ENCODE measurements at regions of chr10 and their contacts with region 1.

Region 1: DNA sequence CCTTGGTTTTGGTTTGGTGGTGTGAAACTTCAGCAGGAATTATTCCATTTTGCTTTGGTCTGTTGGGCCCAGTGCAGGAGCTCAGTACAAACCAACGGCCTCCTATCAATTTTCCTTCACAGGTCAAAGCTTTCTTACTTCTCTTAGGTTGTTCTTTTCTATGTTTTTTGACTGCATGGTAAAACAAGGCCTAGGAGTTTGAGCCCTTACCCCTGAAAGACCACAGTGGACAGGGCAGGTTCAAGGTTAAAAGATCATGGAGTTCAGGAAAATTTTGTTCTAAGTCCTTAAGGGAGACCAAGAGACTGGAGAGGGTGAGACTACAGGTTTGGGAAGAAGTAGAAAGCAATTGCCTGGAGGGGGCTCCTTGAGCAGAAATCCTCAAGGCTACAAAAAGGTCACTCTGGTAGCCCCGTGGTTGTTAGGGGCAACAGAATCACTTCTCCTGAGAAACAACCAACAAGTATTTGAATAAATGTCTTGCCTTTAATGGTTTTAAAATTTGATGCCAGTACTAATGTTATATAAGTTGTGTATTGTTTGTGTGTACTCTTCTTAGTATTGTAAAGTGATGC is 40.9 kb upstream of the FHIP2A start:
- DNase-seq: no peak
- ATAC-seq: peak; percentile 9 to 38; a peak in 3 of 6 replicates
- H3K4me3 ChIP-seq: no peak overlapping the region
- H3K27ac ChIP-seq: peak overlapping the region; percentile 68 to 79
- H3K4me1 ChIP-seq: peaks cover 37% of the 10 kb centered on the region
- CTCF ChIP-seq: no peak
- EP300 ChIP-seq: no peak
- POLR2A ChIP-seq: no peak
- RAD21 ChIP-seq: no peak

Region 2: DNA sequence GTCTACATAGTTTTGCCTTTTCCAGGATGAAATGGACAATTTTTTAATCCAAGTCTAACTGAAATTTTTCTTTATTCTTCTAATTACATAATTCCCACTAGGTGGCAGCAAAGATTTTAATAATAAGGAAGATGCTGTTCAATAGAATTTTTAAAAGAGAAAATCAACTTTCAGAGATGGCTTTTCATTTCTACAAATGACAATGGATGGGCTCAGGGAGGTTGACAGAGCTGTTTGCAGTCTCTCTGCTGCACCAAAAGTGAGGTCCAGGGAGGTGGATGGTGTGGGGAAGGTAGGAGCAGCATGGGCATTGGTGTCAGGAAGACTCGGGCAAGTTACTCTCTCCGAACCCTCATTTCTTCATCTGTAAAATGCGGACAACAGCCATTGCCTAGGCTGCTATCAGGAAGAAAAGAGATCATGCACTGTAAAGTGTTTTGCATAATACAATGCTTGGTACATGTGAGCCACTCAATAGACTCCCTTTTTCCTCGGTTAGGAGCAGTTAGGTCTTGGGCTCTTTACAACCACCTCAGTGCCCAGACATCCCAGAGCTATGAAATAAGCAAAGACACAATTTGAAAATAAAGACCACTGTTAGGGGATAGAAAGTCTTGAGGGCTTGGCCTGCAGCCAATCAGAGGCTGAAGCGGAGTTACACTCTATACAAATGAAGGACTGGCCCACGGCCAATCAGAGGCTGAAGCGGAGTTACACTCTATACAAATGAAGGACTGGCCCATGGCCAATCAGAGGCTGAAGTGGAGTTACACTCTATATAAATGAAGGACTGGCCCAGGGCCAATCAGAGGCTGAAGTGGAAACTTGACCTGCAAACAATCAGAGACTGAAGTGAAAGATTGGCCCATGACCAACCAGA is 229.7 kb before region 1 on chr10:
- CTCF ChIA-PET with region 1: interaction called, 89 read pairs
- POLR2A ChIA-PET with region 1: no interaction called
- DNase-seq: peak; percentile 9 to 17
- ATAC-seq: peak in 1 of 2 experiments; percentile 30; a peak in 2 of 6 replicates
- H3K4me3 ChIP-seq: no peak overlapping the region
- H3K27ac ChIP-seq: no peak overlapping the region
- H3K4me1 ChIP-seq: no peaks in the 10 kb centered on the region
- CTCF ChIP-seq: peak; percentile 79
- EP300 ChIP-seq: no peak
- POLR2A ChIP-seq: no peak
- RAD21 ChIP-seq: peak; percentile 78 to 93

Region 3: DNA sequence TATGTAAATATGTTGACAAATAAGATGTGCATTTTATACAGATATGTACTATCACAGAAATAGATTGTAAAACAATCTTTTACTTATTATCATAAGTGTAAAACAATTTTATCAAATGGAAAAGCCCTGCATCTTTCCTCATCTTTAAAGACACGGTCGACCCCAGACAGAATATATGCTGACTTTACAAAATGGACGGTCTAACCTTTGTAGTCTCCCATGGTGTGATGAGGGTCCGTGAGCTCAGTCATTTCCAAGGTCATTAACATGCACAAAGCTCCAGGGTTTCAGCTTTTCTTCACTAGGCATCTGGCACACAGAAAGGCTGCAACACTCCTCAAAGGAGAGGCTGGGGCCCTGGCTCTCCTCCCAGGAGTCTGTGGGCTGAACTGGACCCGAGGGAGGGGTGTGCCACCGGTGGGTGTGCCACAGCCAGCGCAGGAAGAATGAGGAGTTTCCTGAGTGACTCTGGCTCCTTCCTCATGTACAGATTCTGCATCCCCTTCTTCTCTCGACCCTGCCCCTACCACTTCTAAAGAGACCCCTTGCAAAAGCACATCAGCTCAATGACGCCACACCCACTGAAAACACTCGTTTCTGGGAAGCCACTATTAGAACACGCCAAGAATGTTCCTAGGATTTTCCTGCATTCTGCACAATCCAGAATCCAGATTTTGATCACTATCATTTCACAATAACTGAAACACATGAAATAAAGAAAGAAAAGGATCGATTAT is 96.4 kb before region 1 on chr10:
- CTCF ChIA-PET with region 1: interaction called, 15 read pairs
- POLR2A ChIA-PET with region 1: no interaction called
- DNase-seq: peak; percentile 47 to 69
- ATAC-seq: peak; percentile 85 to 86
- H3K4me3 ChIP-seq: peak overlapping the region; percentile 36
- H3K27ac ChIP-seq: peak overlapping the region; percentile 83 to 88
- H3K4me1 ChIP-seq: peaks cover 74% of the 10 kb centered on the region
- CTCF ChIP-seq: no peak
- EP300 ChIP-seq: no peak
- POLR2A ChIP-seq: no peak
- RAD21 ChIP-seq: no peak

Region 4: DNA sequence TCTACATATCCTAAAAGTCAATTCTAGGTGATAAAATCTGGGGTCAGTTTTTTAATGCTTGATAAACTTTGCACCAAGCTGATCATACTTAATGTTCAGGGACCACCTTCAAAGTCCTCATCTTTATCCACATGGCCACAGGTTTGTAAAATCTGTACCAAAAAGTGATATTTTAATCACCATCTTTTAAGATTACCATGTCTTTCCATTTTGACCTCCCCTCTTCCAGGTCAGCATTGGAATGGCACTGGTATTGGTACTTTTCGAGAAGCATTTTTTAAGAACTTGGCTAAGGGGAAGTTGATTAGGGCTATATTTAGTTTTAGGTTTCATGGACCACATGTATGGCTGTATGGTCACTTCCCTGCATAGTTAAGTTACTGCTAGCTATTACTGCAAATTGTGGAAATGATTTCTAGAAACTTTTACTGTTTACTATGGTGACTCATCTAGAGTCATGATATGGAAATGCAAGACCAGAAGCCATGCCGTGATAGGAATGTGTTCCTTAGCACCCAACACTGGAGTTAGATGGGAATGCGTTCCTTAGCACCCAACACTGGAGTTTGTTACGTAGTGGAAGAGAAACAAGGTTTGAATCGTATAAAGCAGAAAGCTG is 71.9 kb before region 1 on chr10:
- CTCF ChIA-PET with region 1: interaction called, 33 read pairs
- POLR2A ChIA-PET with region 1: no interaction called
- DNase-seq: peak; percentile 58 to 78
- ATAC-seq: peak; percentile 90 to 93
- H3K4me3 ChIP-seq: no peak overlapping the region
- H3K27ac ChIP-seq: peak overlapping the region; percentile 57 to 73; a peak in 5 of 6 replicates
- H3K4me1 ChIP-seq: peaks cover 34% of the 10 kb centered on the region
- CTCF ChIP-seq: no peak
- EP300 ChIP-seq: no peak
- POLR2A ChIP-seq: no peak
- RAD21 ChIP-seq: 0 out of 5 replicates have a peak, but pooled peaks of 1 of the 2 experiments have one; percentile 14

Region 5: GRCh38 chr10:114735946-114736345 is 44.8 kb before region 1 on chr10:
- CTCF ChIA-PET with region 1: no interaction called
- POLR2A ChIA-PET with region 1: no interaction called
- DNase-seq: no peak
- ATAC-seq: no peak
- H3K4me3 ChIP-seq: no peak overlapping the region
- H3K27ac ChIP-seq: no peak overlapping the region
- H3K4me1 ChIP-seq: peaks cover 6% of the 10 kb centered on the region; the same call in 2 of the 3 replicates
- CTCF ChIP-seq: no peak
- EP300 ChIP-seq: no peak
- POLR2A ChIP-seq: no peak
- RAD21 ChIP-seq: no peak

Region 6: DNA sequence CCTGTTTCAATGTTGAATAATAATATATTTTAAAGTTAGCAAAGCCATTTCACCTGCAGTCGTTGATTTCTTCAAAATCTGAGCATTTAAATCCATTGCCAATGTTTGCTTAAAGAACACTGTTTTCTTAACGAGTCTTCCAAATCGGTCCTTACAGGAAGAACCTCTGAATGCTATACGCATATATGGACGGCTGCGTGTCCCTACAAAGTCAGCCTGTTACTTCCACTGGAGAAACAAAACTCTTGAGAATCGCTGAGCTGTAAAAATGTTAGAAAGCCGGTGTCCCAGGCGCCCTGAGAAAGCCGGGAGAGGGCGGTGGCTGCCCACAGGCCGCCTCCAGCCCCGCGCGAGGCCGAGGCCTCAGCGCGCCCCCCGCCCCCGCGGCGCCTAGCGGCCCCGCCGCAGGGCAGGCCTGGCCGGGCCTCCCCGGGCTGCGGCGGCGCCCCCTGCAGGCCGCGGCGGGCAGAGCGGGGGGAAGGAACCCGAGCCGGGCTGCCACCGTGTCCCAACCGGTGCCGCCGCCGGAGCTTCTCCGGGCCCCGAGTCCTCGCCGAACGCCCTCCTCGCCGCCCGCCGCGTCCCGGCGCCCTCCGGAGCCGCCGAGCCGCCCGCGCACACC is 40.7 kb after region 1 on chr10 and contains the start of gene FHIP2A:
- CTCF ChIA-PET with region 1: interaction called, 10 read pairs
- POLR2A ChIA-PET with region 1: no interaction called
- DNase-seq: peak; percentile 61 to 75
- ATAC-seq: peak; percentile 89
- H3K4me3 ChIP-seq: peak within 1 kb of the TSS; percentile 70
- H3K27ac ChIP-seq: peak within 1 kb of the TSS; percentile 88 to 100
- H3K4me1 ChIP-seq: peaks cover 36% of the 10 kb centered on the region
- CTCF ChIP-seq: peak; percentile 95
- EP300 ChIP-seq: no peak
- POLR2A ChIP-seq: 0 out of 2 replicates have a peak, but pooled peaks have one; percentile 19
- RAD21 ChIP-seq: peak; percentile 30 to 53; a peak in 3 of 5 replicates
- polyA plus RNA-seq, gene FHIP2A: 18.2 and 18.4 TPM in 2 replicates